Dorsolateral prefrontal cortex (tissue), 120 donors: ENCODE measurements at regions of chr17 and their contacts with region 1.

Region 1: DNA sequence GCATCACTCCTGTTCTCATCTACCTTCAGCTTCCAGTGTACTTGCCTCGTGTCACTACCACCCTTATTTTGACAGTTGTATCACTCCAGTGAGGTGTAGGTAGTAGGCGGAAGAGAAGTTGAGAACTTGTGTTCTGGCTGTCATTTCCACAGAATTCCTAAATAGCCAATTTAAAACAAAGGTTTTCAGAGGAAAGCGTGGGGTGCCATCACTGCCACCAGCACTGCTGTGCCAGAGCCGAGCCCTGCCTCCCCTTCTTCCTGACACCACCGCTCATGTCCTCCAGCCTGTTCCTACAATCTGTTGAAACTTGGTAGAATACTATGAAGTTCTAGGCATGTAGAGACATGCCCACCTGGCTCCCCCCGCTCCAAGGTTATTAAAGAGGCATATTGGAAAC is 215.8 kb downstream of the TANC2 start:
- DNase-seq: peak in 5 of 10 donors; percentile 53 to 73 (median 53)
- H3K4me3 ChIP-seq: no peak overlapping the region
- H3K27ac ChIP-seq: peak overlapping the region in 15 of 59 donors; percentile 2 to 78 (median 34)
- H3K27me3 ChIP-seq: no peaks in the 10 kb centered on the region
- CTCF ChIP-seq: no peak

Region 2: DNA sequence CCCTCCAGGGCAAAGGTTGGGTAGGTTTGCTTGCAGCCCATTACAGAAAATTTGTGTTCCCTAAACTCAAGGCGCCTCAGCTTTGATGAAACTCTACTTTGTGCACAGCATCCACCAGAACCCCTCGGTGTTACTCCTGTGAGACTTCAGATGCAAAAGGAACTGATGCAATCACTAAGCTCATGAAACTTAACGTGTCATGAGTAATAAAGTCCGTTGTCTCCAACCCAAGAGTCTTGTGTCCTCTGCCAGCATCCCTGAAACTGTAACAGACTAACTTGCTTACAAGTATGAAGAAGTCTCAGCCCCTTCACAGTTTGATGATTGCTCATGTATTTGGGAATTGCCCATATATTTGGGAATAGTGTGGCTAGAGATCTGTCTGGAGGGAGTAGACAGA is 299.0 kb before region 1 on chr17:
- intact Hi-C with region 1: no loop called
- DNase-seq: no peak
- H3K4me3 ChIP-seq: no peak overlapping the region
- H3K27ac ChIP-seq: no peak overlapping the region
- H3K27me3 ChIP-seq: no peaks in the 10 kb centered on the region
- CTCF ChIP-seq: no peak

Region 3: DNA sequence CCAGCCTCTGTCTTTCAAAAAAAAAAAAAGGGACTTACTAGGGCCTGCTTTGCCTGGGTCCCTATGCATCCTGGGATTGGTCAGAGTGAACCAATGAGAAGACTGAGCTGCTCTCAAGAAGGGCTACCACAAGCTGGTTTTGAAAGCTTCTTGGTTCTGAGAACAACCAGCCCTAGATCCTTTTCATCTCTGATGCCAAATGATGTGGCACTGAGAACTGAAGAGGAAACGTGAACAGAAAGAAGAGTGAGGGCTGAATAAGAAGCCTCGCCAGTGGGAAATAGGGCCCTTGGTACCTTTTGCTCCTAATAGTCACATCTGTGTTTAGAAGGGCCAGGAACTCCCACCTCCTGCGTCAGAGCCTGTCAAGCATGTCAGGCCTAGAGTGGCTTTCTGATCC is 429.5 kb after region 1 on chr17:
- intact Hi-C with region 1: loop called in 1 of 2 experiments (anchors 5 kb)
- DNase-seq: no peak
- H3K4me3 ChIP-seq: no peak overlapping the region
- H3K27ac ChIP-seq: peak overlapping the region in 4 of 59 donors; percentile 45 to 74 (median 56)
- H3K27me3 ChIP-seq: no peaks in the 10 kb centered on the region
- CTCF ChIP-seq: no peak